IMR-90 (cell line): ENCODE measurements at regions of chr12 and their contacts with region 1.

Region 1: DNA sequence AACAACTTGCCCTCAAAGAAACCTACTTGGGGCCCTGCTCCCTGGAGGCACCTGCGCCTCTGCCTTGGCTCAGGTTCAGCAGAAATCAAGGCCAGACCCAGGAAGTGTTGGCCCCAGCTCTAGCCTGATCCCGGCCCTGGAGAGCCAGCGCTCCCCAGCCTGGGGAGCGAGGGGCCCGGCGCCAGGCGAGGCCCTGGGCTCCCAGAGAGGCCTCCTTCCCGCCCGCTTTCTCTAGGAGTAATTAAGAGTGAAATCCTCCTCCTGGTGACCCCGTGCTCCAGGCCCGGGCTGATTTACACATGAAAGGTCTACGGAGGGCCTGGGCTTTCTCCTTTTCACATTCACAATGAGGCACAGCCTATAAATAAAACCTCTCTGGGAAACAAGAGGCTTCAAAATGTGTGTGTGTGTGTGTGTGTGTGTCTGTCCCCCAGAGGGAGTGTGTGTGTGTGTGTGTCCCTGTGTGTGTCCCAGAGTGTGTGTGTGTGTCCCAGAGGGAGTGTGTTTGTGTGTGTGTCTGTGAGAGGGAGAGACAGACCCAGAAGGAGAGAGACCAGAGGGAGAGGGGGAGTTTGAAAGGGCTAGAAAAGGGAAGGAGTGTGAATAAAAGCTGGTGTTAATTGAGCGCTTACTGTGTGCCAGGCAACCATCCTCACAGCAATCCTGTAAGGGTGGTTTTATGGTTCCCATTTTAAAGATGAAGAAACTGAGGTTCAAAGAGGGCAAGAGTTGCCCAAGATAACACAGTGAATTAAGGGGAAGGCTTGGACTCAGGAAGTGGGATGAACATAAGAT is 23.8 kb upstream of the COX6A1 start:
- DNase-seq: no peak
- ATAC-seq: no peak
- H3K4me3 ChIP-seq: no peak overlapping the region
- H3K27ac ChIP-seq: no peak overlapping the region
- H3K4me1 ChIP-seq: no peaks in the 10 kb centered on the region
- H3K27me3 ChIP-seq: peaks cover 20% of the 10 kb centered on the region
- CTCF ChIP-seq: no peak
- POLR2A ChIP-seq: no peak
- RAD21 ChIP-seq: no peak

Region 2: DNA sequence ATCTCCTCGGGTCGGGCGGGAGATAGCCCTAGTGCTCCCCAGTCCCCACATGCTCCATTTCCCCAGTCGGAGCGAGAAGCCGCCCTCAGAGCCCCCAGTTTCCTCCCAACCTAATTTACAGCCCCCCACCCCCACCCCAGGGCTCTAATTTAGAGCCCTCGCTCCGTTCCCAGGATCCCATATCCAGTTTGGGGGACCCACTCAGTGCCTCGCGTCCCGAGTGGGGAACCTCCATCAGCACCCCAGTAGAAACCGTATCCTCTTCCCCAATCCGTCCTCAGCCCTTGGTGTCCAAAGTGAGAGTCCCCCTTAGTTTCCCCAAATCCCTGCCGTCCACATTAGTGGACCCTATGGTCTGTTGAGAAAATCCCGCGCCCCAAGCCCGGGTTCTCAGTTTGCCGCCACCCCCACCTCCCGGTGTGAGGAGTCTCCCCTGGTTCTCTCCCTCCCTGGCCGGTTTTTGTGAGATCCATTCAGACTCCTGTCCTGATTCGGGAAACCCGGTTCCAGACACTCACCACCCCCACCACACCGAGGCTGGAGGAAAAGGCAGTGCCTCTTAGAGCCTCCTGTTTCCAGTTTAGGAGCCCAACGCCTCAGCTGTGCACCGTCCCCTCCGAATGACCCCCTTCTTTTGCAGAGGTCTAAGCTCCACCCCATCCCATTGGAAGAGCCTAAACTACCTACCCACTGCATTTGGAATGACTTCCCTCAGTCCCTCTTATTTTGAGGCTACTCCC is 44.3 kb before region 1 on chr12:
- CTCF ChIA-PET with region 1: no interaction called
- POLR2A ChIA-PET with region 1: no interaction called
- dilution Hi-C with region 1: no loop called
- in situ Hi-C with region 1: no loop called
- intact Hi-C with region 1: loop called (anchors 5 kb)
- DNase-seq: no peak
- ATAC-seq: no peak
- H3K4me3 ChIP-seq: no peak overlapping the region
- H3K27ac ChIP-seq: no peak overlapping the region
- H3K4me1 ChIP-seq: no peaks in the 10 kb centered on the region
- H3K27me3 ChIP-seq: peaks cover 82% of the 10 kb centered on the region
- CTCF ChIP-seq: no peak
- POLR2A ChIP-seq: no peak
- RAD21 ChIP-seq: no peak

Region 3: GRCh38 chr12:120457133-120457532 is 43.0 kb after region 1 on chr12:
- CTCF ChIA-PET with region 1: no interaction called
- POLR2A ChIA-PET with region 1: no interaction called
- dilution Hi-C with region 1: no loop called
- in situ Hi-C with region 1: no loop called
- intact Hi-C with region 1: no loop called
- DNase-seq: no peak
- ATAC-seq: no peak
- H3K4me3 ChIP-seq: no peak overlapping the region
- H3K27ac ChIP-seq: no peak overlapping the region
- H3K4me1 ChIP-seq: no peaks in the 10 kb centered on the region
- H3K27me3 ChIP-seq: no peaks in the 10 kb centered on the region
- CTCF ChIP-seq: peak; percentile 15; the same call in 1 of the 2 replicates
- POLR2A ChIP-seq: no peak
- RAD21 ChIP-seq: no peak